Heart right ventricle (tissue), 16 donors: ENCODE measurements at regions of chrX and their contacts with region 1.

Region 1: GRCh38 chrX:6021316-6022091 is 207.2 kb downstream of the NLGN4X start:
- DNase-seq: no peak
- ATAC-seq: no peak
- H3K4me3 ChIP-seq: no peak overlapping the region
- H3K27ac ChIP-seq: no peak overlapping the region
- H3K4me1 ChIP-seq: no peaks in the 10 kb centered on the region
- H3K27me3 ChIP-seq: no peaks in the 10 kb centered on the region
- CTCF ChIP-seq: peak in 8 of 9 donors; percentile 24 to 59 (median 47)

Region 2: GRCh38 chrX:5965406-5965805 is 56.1 kb before region 1 on chrX:
- intact Hi-C with region 1: loop called in 1 of 10 experiments (anchors 10 kb)
- DNase-seq: no peak
- ATAC-seq: no peak
- H3K4me3 ChIP-seq: no peak overlapping the region
- H3K27ac ChIP-seq: no peak overlapping the region
- H3K4me1 ChIP-seq: no peaks in the 10 kb centered on the region
- H3K27me3 ChIP-seq: no peaks in the 10 kb centered on the region
- CTCF ChIP-seq: no peak

Region 3: DNA sequence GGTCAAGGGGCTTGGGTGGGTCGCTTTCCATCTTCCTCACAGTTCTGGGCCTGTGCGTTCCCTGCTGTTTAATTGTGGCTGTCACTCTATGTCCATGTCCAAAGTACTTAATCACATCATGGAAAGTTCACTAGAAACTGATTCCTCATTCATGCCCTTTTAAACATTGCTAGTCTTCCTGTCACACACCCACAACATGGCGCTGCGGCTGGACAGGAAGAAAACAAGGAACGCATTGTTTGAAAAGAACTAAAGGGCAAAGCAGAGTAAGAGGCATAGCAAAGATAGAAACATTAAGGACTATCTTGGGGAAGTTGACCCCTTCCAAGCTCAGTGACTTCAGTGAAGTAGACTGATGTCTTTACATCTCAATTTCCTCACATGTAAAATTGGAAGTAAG is 1887.3 kb after region 1 on chrX:
- intact Hi-C with region 1: loop called in 1 of 10 experiments (anchors 10 kb)
- DNase-seq: no peak
- ATAC-seq: no peak
- H3K4me3 ChIP-seq: no peak overlapping the region
- H3K27ac ChIP-seq: no peak overlapping the region
- H3K4me1 ChIP-seq: no peaks in the 10 kb centered on the region
- H3K27me3 ChIP-seq: no peaks in the 10 kb centered on the region
- CTCF ChIP-seq: no peak